Heart left ventricle (tissue), 16 donors: ENCODE measurements at regions of chr20 and their contacts with region 1.

Region 1: DNA sequence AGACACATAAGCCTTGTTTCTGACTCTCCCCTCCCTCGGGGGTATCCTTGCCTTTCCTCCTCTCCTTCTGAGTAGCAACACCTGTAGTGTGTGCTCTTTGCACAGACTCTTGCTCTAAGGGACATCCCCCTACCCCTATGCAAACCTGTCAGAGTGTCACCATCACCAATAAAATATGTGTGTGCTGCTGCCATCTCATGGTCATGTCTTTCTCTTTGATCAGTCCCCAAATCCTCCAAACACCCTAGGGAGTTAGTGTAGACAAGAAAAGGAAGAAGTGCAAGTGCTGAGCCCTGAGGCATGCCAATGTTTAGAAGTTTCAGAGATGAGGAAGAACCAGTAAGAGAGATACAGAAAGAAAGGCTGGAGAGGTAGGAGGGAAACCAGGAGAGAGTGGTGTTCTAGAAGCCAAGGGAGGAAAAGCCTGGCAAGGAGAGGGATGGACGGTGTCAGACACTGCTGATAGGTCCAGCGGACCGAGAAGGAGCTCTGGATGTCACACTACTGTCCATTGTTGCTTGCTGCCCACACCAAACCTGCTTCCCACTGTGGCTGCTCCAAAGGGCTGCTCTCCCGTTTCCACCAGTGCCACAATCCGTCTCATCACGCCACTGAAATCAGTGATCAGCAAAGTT is 16.4 kb downstream of the TRMT6 start:
- DNase-seq: no peak
- ATAC-seq: peak; percentile 58 to 78 (median 68)
- H3K4me3 ChIP-seq: no peak overlapping the region
- H3K27ac ChIP-seq: no peak overlapping the region
- H3K4me1 ChIP-seq: no peaks in the 10 kb centered on the region
- H3K27me3 ChIP-seq: no peaks in the 10 kb centered on the region
- CTCF ChIP-seq: peak in 9 of 12 donors; percentile 2 to 44 (median 32)
- POLR2A ChIP-seq: no peak

Region 2: GRCh38 chr20:5529331-5530148 is 404.4 kb before region 1 on chr20:
- intact Hi-C with region 1: loop called in 2 of 10 experiments (anchors 5 to 10 kb)
- DNase-seq: peak; percentile 73 to 91 (median 79)
- ATAC-seq: peak; percentile 73 to 92 (median 88)
- H3K4me3 ChIP-seq: peak overlapping the region in 3 of 12 donors; percentile 1 to 25 (median 23)
- H3K27ac ChIP-seq: no peak overlapping the region
- H3K4me1 ChIP-seq: peaks cover 0 to 22% (median 6%) of the 10 kb centered on the region in 12 donors
- H3K27me3 ChIP-seq: no peaks in the 10 kb centered on the region
- CTCF ChIP-seq: peak; percentile 56 to 90 (median 74)
- POLR2A ChIP-seq: no peak

Region 3: DNA sequence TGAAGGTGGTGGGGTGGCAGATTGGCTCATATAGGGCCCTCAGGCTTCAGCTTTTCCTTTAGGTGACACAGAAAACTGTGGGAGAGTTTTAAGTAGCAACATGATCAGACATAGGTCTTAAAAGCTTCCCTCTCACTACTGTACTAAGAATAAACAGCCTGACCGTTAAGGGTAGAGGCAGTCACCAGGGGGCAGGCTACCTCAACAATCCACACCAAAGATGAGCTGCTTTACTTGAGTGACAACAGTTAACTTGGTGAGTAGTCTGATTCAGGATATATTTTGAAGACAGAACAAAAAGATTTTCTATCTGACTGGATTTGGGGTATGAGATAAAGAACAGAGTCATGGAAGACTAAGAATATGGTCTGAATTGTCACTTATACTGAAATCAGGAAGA is 376.8 kb before region 1 on chr20:
- intact Hi-C with region 1: loop called in 4 of 10 experiments (anchors 10 kb)
- DNase-seq: peak in 4 of 5 donors; percentile 31 to 46 (median 34)
- ATAC-seq: peak in 3 of 4 donors; percentile 71 to 79 (median 72)
- H3K4me3 ChIP-seq: no peak overlapping the region
- H3K27ac ChIP-seq: no peak overlapping the region
- H3K4me1 ChIP-seq: peaks cover 0 to 9% (median 0%) of the 10 kb centered on the region in 12 donors
- H3K27me3 ChIP-seq: no peaks in the 10 kb centered on the region
- CTCF ChIP-seq: peak; percentile 33 to 69 (median 52)
- POLR2A ChIP-seq: no peak

Region 4: DNA sequence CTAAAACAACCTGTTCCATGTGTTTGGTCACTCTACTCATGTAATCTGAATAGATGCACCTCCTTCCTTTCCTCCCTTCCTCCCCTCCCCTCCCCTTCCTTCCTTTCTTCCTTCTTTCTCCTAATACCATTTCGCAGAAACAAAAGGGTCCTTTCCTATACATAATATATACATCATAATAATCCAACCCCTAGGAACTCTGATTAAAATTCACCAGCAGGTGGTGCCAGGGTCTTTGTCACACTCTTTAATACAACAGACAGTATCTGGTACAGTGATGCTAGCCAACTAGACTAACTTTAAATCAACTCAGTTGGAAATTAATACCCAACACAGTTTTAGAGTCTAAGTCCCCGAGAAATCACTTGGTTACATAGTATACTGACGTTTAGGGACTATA is 364.9 kb before region 1 on chr20:
- intact Hi-C with region 1: loop called in 3 of 10 experiments (anchors 5 to 10 kb)
- DNase-seq: peak in 1 of 5 donors; percentile 22
- ATAC-seq: peak in 2 of 4 donors; percentile 65 to 67
- H3K4me3 ChIP-seq: no peak overlapping the region
- H3K27ac ChIP-seq: peak overlapping the region in 1 of 12 donors; percentile 84
- H3K4me1 ChIP-seq: peaks cover 0 to 21% (median 0%) of the 10 kb centered on the region in 12 donors
- H3K27me3 ChIP-seq: no peaks in the 10 kb centered on the region
- CTCF ChIP-seq: peak; percentile 33 to 63 (median 48)
- POLR2A ChIP-seq: no peak

Region 5: GRCh38 chr20:5806457-5807263 is 127.3 kb before region 1 on chr20:
- intact Hi-C with region 1: loop called in 5 of 10 experiments (anchors 2 to 10 kb)
- DNase-seq: peak in 1 of 5 donors; percentile 31
- ATAC-seq: peak; percentile 49 to 70 (median 60)
- H3K4me3 ChIP-seq: no peak overlapping the region
- H3K27ac ChIP-seq: no peak overlapping the region
- H3K4me1 ChIP-seq: peaks cover 0 to 24% (median 10%) of the 10 kb centered on the region in 12 donors
- H3K27me3 ChIP-seq: no peaks in the 10 kb centered on the region
- CTCF ChIP-seq: peak in 6 of 12 donors; percentile 9 to 34 (median 20)
- POLR2A ChIP-seq: no peak

Region 6: GRCh38 chr20:5822569-5822968 is 111.3 kb before region 1 on chr20:
- intact Hi-C with region 1: loop called in 5 of 10 experiments (anchors 5 to 10 kb)
- DNase-seq: no peak
- ATAC-seq: no peak
- H3K4me3 ChIP-seq: no peak overlapping the region
- H3K27ac ChIP-seq: no peak overlapping the region
- H3K4me1 ChIP-seq: peaks cover 0 to 40% (median 3%) of the 10 kb centered on the region in 12 donors
- H3K27me3 ChIP-seq: no peaks in the 10 kb centered on the region
- CTCF ChIP-seq: no peak
- POLR2A ChIP-seq: no peak

Region 7: GRCh38 chr20:6014017-6014416 is 80.1 kb after region 1 on chr20:
- intact Hi-C with region 1: no loop called
- DNase-seq: no peak
- ATAC-seq: no peak
- H3K4me3 ChIP-seq: no peak overlapping the region
- H3K27ac ChIP-seq: no peak overlapping the region
- H3K4me1 ChIP-seq: peaks cover 0 to 13% (median 0%) of the 10 kb centered on the region in 12 donors
- H3K27me3 ChIP-seq: no peaks in the 10 kb centered on the region
- CTCF ChIP-seq: no peak
- POLR2A ChIP-seq: no peak

Region 8: GRCh38 chr20:6044115-6044514 is 110.2 kb after region 1 on chr20:
- intact Hi-C with region 1: no loop called
- DNase-seq: no peak
- ATAC-seq: no peak
- H3K4me3 ChIP-seq: no peak overlapping the region
- H3K27ac ChIP-seq: no peak overlapping the region
- H3K4me1 ChIP-seq: no peaks in the 10 kb centered on the region
- H3K27me3 ChIP-seq: no peaks in the 10 kb centered on the region
- CTCF ChIP-seq: no peak
- POLR2A ChIP-seq: no peak